Mammary epithelial cell (primary cell): ENCODE measurements at regions of chr2 and their contacts with region 1.

Region 1: DNA sequence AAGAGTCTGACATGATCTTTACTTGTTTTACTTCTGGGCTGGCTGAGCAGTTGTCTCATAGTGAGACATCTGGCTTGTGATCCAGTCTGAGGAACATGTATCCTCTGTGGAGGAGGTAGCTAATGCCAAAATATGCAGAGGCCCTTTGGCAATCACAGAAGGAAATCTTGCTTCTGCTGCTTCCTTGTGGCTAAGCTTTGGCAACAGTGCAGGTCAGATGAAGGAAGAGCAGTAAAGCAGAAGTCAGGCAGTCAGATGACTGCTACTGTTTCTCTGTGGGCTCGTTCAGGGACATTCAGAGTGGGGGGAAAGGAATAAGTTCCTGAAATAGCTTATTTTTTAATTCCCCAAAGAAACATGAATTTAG is 22.3 kb downstream of the DOK1 start:
- DNase-seq: peak; percentile 56
- H3K4me3 ChIP-seq: no peak overlapping the region
- H3K27ac ChIP-seq: no peak overlapping the region
- H3K4me1 ChIP-seq: peaks cover 24% of the 10 kb centered on the region
- H3K27me3 ChIP-seq: no peaks in the 10 kb centered on the region
- CTCF ChIP-seq: peak in 1 of 2 donors; percentile 18

Region 2: DNA sequence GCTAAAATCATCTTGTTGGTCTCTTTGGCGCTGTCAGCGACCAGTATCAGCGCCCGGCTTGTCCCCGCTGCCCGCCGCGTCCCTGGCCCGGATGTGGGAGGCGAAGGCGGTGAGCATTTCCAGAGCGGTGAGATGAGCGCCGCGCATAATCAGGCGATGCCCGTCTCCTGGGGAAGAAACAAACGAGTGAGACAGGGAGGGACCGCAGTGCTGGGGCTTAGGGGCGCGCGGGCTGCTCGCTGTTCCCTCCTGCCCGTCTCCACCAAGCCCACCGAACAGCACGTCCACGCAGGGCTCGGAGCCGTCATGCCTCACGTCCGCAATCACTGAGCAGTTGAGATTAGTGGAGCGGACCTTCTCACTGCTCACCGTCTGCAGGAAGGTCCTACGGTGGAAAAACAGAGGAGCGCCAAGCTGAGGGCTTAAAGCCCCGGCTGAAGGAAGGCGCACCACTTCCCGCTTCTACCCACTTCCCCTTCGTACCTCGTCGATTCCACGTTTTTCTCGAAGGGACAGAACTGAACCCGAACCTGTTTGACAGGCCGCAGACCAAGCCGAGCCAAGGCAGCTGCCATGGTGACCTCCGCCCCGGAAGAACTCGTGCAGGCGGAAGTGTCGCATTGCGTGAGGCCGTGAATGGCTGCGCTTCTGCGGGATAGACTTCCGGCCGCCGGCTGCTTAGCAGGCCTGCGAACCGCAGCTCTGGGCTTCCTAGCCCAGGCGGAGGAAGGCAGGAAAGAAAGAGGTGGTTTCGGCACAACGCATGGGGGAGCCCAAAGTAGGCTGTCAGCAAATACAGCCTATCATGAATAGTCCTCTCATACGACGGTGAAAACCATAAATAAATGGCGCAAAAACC is 104.5 kb before region 1 on chr2 and contains the start of gene MRPL53:
- CTCF ChIA-PET with region 1: no interaction called
- dilution Hi-C with region 1: loop called (anchors 5 kb)
- in situ Hi-C with region 1: no loop called
- intact Hi-C with region 1: no loop called
- DNase-seq: peak; percentile 89
- H3K4me3 ChIP-seq: peak within 1 kb of the TSS; percentile 52 to 79 (median 67)
- H3K27ac ChIP-seq: peak within 1 kb of the TSS; percentile 85
- H3K4me1 ChIP-seq: peaks cover 14% of the 10 kb centered on the region
- H3K27me3 ChIP-seq: no peaks in the 10 kb centered on the region
- CTCF ChIP-seq: no peak
- total RNA-seq, gene MRPL53: 9.3 to 70.1 TPM